ENCODE measurements at regions of chrX and their contacts with region 1.

Region 1: DNA sequence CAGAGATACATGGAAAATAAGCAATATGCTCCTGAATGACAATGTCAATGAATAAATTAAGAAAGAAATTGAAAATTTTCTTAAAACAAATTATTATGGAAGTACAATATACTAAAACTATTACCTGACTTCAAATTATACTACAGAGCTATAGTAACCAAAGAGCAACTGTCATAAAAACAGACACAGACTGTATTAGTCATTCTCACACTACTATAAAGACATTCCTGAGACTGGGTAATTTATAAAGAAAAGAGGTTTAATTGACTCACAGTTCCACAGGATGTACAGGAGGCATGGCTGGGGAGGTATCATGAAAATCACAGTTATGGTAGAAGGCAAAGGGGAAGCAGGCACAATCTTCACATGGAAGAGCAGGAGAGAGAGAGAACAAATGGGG is 60.0 kb upstream of the CYSLTR1 start:
- DNase-seq: no peak
- ATAC-seq: no peak
- H3K4me3 Mint-ChIP-seq: no peak overlapping the region
- H3K27ac Mint-ChIP-seq: no peak overlapping the region
- H3K4me1 Mint-ChIP-seq: peaks cover 2% of the 10 kb centered on the region
- H3K27me3 Mint-ChIP-seq: no peaks in the 10 kb centered on the region

Region 2: GRCh38 chrX:78624962-78625909 is 237.9 kb after region 1 on chrX:
- CTCF ChIA-PET with region 1: no interaction called
- POLR2A ChIA-PET with region 1: no interaction called
- intact Hi-C with region 1: loop called in 1 of 2 experiments (anchors 5 kb)
- DNase-seq: no peak
- ATAC-seq: no peak
- H3K4me3 Mint-ChIP-seq: no peak overlapping the region
- H3K27ac Mint-ChIP-seq: no peak overlapping the region
- H3K4me1 Mint-ChIP-seq: peaks cover 3% of the 10 kb centered on the region
- H3K27me3 Mint-ChIP-seq: no peaks in the 10 kb centered on the region

Region 3: GRCh38 chrX:78653118-78653822 is 265.9 kb after region 1 on chrX:
- CTCF ChIA-PET with region 1: no interaction called
- POLR2A ChIA-PET with region 1: no interaction called
- intact Hi-C with region 1: no loop called
- DNase-seq: peak; percentile 9
- ATAC-seq: peak; percentile 66
- H3K4me3 Mint-ChIP-seq: no peak overlapping the region
- H3K27ac Mint-ChIP-seq: no peak overlapping the region
- H3K4me1 Mint-ChIP-seq: peaks cover 17% of the 10 kb centered on the region
- H3K27me3 Mint-ChIP-seq: peaks cover 4% of the 10 kb centered on the region